ENCODE measurements at regions of chr2 and their contacts with region 1.

Region 1: DNA sequence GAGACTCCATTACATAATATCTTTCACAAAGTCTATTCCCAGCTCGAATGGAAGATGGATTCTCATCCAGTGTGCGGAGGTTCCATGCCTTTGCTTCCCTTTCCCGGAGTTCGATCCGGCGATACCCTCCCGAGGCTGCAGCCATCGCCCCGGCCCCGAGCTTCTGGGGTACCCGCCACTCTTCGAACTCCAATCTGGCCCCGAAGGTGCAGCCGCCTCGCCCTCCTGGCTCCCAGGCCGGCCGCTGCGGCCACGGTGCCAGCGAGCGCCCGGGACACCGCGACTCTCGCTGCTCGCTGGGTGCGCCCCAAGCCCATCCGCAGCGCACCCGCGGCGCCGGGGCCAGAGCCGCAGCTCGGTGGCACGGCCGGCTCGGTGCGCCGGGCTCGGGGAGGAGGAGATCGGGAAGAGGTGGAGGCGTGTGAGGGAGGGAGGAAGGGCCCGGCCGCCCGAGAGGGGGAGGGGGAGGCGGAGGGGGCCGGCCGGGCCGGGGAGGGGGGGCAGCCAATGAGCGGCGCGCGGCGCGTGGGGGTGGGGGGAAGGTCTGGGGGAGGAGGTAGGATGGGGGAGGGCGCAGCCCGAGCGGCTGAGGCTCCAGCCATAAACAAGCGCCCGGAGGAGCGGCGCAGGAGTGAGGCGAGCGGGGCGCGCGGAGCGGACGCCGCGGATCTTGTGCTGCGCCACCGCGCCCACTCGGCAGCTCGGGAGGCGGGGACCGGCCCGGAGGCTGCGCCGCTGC is at the start of gene CRIM1:
- DNase-seq: no peak
- ATAC-seq: peak; percentile 80
- H3K4me3 ChIP-seq: peak within 1 kb of the TSS; percentile 96 to 99
- H3K27ac ChIP-seq: peak within 1 kb of the TSS; percentile 98
- H3K4me1 ChIP-seq: peaks cover 39% of the 10 kb centered on the region
- H3K27me3 ChIP-seq: no peaks in the 10 kb centered on the region
- CTCF ChIP-seq: no peak
- total RNA-seq, gene CRIM1: 290 TPM

Region 2: DNA sequence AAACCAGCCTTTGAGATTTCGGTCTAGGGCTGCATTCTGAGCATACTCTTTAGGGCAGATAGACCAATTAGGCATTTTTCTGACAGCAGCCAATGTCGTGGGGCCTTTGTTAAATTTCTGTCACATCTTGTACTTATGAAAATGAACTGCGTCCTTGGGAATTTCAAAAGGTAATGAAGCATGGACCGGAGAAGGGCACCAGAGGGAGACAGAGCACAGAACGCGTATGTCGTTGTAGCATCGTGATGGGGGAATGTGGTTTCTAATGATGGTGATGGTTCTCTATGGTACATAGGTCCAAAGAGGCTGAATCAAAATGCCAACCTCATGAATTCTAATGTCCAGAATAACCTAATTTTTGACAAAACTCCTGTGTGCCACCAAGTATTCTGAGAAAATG is 483.6 kb before region 1 on chr2:
- CTCF ChIA-PET with region 1: no interaction called
- POLR2A ChIA-PET with region 1: no interaction called
- in situ Hi-C with region 1: no loop called
- intact Hi-C with region 1: loop called (anchors 10 kb)
- DNase-seq: no peak
- ATAC-seq: peak; percentile 89
- H3K4me3 ChIP-seq: no peak overlapping the region
- H3K27ac ChIP-seq: no peak overlapping the region
- H3K4me1 ChIP-seq: no peaks in the 10 kb centered on the region
- H3K27me3 ChIP-seq: no peaks in the 10 kb centered on the region
- CTCF ChIP-seq: peak; percentile 88

Region 3: DNA sequence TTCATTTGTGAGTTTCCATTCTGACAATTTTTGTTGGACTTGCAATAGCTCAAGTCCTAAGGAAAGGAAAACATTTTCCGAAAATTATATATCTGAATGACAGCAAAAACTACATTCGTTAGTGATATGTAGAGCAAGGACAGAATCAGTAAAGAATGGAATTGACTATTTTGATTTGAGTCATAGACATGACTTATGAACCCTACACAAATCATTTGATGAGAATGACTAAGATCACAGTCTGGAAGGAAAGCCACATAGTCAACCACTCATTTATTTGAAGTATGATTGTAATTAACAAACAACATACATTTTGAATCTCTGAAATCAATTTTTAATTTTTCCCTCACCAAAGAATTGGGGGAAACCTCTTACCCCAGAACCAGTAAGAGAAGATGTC is 231.3 kb before region 1 on chr2:
- CTCF ChIA-PET with region 1: no interaction called
- POLR2A ChIA-PET with region 1: no interaction called
- in situ Hi-C with region 1: no loop called
- intact Hi-C with region 1: no loop called
- DNase-seq: no peak
- ATAC-seq: no peak
- H3K4me3 ChIP-seq: no peak overlapping the region
- H3K27ac ChIP-seq: no peak overlapping the region
- H3K4me1 ChIP-seq: no peaks in the 10 kb centered on the region
- H3K27me3 ChIP-seq: no peaks in the 10 kb centered on the region
- CTCF ChIP-seq: no peak

Region 4: GRCh38 chr2:36333350-36333972 is 21.9 kb before region 1 on chr2:
- CTCF ChIA-PET with region 1: interaction called, 3 read pairs
- POLR2A ChIA-PET with region 1: interaction called, 14 read pairs
- in situ Hi-C with region 1: no loop called
- intact Hi-C with region 1: no loop called
- DNase-seq: no peak
- ATAC-seq: peak; percentile 75
- H3K4me3 ChIP-seq: no peak overlapping the region
- H3K27ac ChIP-seq: peak overlapping the region; percentile 48; the same call in 1 of the 2 replicates
- H3K4me1 ChIP-seq: peaks cover 19% of the 10 kb centered on the region
- H3K27me3 ChIP-seq: no peaks in the 10 kb centered on the region
- CTCF ChIP-seq: peak; percentile 66

Region 5: DNA sequence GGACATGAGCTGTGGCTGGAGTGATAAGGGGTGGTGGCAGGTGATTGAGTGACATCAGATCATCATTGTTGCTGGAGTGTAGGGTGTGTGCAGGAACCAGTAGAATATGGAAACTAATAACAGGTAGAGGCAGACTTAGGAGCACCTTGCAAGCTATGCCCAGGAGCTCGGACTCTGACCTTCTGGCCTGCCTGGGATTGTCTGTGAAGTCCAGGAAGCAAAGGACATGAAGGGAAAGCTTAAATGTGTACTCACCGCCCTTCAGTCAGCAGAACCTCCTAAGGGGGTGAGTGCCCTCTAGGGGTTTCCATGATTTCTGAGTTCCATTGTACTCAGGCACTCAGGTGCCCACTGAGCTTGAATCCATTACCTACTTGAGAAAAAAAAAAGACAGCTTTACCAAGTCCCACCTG is 104.4 kb after region 1 on chr2:
- CTCF ChIA-PET with region 1: interaction called, 7 read pairs
- POLR2A ChIA-PET with region 1: no interaction called
- in situ Hi-C with region 1: no loop called
- intact Hi-C with region 1: loop called (anchors 10 kb)
- DNase-seq: no peak
- ATAC-seq: peak; percentile 57
- H3K4me3 ChIP-seq: no peak overlapping the region
- H3K27ac ChIP-seq: peak overlapping the region; percentile 86
- H3K4me1 ChIP-seq: peaks cover 91% of the 10 kb centered on the region
- H3K27me3 ChIP-seq: no peaks in the 10 kb centered on the region
- CTCF ChIP-seq: peak; percentile 81

Region 6: GRCh38 chr2:36663851-36664695 is 308.8 kb after region 1 on chr2:
- CTCF ChIA-PET with region 1: interaction called, 9 read pairs
- POLR2A ChIA-PET with region 1: no interaction called
- in situ Hi-C with region 1: no loop called
- intact Hi-C with region 1: loop called (anchors 5 kb)
- DNase-seq: peak; percentile 74
- ATAC-seq: peak; percentile 97
- H3K4me3 ChIP-seq: peak overlapping the region in 1 of 2 experiments; percentile 32; a peak in 2 of 4 replicates
- H3K27ac ChIP-seq: peak overlapping the region; percentile 84
- H3K4me1 ChIP-seq: peaks cover 21% of the 10 kb centered on the region
- H3K27me3 ChIP-seq: no peaks in the 10 kb centered on the region
- CTCF ChIP-seq: peak; percentile 79

Region 7: GRCh38 chr2:37326285-37326684 is 971.0 kb after region 1 on chr2:
- CTCF ChIA-PET with region 1: no interaction called
- POLR2A ChIA-PET with region 1: no interaction called
- in situ Hi-C with region 1: no loop called
- intact Hi-C with region 1: no loop called
- DNase-seq: no peak
- ATAC-seq: no peak
- H3K4me3 ChIP-seq: no peak overlapping the region
- H3K27ac ChIP-seq: no peak overlapping the region
- H3K4me1 ChIP-seq: peaks cover 20% of the 10 kb centered on the region
- H3K27me3 ChIP-seq: peaks cover 7% of the 10 kb centered on the region
- CTCF ChIP-seq: no peak